BJ (cell line): ENCODE measurements at regions of chr15 and their contacts with region 1.

Region 1: GRCh38 chr15:66603301-66604179 is 37.7 kb upstream of the LCTL start:
- DNase-seq: no peak
- H3K4me3 ChIP-seq: no peak overlapping the region
- H3K27me3 ChIP-seq: peaks cover 13% of the 10 kb centered on the region; the same call in 1 of the 2 replicates
- CTCF ChIP-seq: peak; percentile 93

Region 2: GRCh38 chr15:66046751-66047150 is 556.8 kb before region 1 on chr15:
- CTCF ChIA-PET with region 1: no interaction called
- POLR2A ChIA-PET with region 1: no interaction called
- DNase-seq: no peak
- H3K4me3 ChIP-seq: no peak overlapping the region
- H3K27me3 ChIP-seq: peaks cover 5% of the 10 kb centered on the region
- CTCF ChIP-seq: no peak

Region 3: DNA sequence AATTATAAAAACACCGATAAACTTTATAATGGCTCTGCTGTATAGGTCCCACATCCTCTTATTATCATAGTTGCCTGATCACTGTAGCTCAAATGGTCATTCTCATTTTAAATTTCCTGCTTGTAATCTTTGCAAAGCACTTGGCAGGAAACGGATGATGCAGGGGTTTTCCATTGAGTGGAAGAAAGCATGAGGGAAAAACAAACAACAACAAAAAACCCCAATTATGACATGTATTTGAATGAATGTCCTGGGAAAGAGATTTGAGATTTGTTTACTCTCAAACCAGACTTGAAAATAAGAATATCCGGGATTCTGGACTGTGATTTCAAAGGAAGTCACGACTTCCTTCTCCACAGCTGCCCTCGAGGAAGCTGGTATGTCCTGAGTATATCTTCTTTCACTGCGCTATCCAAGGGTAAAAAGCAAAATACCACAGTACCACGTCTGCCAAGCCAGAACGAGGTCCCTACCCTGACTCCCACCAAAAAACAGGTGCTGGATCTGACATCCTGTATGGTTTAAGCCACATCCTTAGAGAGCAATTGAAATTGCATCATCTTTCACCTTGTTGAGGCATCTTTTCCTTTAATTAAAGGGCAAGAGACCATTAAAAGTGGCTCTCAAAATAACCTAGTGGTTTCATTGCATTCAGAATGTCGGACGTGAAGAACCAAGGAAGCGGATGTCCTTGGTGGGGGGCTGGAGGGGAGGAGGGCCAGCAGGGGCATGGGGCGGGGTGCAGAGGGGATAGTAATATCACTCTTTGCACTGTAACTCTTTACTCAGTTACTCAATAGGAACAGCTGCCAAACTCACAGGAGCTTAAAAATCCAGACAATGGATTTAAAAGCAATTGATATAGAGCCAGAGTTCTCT is 233.5 kb before region 1 on chr15:
- CTCF ChIA-PET with region 1: no interaction called
- POLR2A ChIA-PET with region 1: no interaction called
- DNase-seq: no peak
- H3K4me3 ChIP-seq: no peak overlapping the region
- H3K27me3 ChIP-seq: no peaks in the 10 kb centered on the region
- CTCF ChIP-seq: no peak

Region 4: GRCh38 chr15:66619151-66619903 is 15.8 kb after region 1 on chr15:
- CTCF ChIA-PET with region 1: interaction called, 23 read pairs
- POLR2A ChIA-PET with region 1: no interaction called
- DNase-seq: no peak
- H3K4me3 ChIP-seq: no peak overlapping the region
- H3K27me3 ChIP-seq: no peaks in the 10 kb centered on the region
- CTCF ChIP-seq: peak; percentile 94